Naive thymus-derived CD4-positive, alpha-beta T cell (primary cell): ENCODE measurements at regions of chr22 and their contacts with region 1.

Region 1: DNA sequence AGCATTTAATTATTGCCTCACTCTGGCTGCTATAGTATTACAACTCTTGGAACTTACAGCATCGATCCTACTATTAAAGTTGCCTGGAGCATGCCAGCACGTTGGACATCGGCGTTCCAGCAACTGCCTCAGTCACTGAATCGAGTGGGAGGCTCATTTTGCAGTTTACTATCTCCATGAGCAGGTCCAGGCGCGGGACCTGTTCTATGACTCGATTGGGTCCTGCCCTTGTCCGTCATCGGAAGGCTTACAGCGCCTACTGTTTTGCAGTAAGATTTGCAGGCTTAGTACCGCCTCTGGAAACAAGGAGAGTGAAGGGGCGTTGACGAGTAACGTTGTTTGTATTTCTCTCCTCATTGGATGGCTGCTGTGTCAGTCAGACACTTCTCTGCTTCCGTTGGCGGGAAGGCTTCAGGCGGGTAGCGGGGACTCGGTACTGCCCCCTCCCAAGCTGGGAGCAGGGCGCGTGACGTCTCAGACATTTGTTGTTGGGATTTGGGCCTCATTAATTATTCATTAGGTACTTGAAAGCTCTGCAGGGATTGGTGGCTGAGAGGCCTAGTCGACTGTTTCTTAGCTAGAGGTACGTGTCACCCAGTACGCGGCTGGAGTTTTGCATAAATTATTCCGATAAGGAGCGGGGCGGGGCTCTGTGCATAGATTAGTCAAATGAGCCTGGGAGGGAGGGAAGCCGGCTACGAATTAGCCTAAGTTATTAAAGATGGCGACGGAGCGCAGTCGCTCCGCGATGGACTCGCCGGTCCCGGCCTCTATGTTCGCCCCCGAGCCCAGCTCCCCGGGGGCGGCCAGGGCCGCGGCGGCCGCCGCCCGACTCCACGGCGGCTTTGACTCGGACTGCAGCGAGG is at the start of gene GTPBP1:
- DNase-seq: peak; percentile 76 to 100 (median 99)
- ATAC-seq: peak; percentile 85
- H3K4me3 ChIP-seq: peak within 1 kb of the TSS; percentile 80
- H3K4me3 Mint-ChIP-seq: peak within 1 kb of the TSS; percentile 71 to 98 (median 93)
- H3K27ac ChIP-seq: peak within 1 kb of the TSS; percentile 90
- H3K27ac Mint-ChIP-seq: peak within 1 kb of the TSS; percentile 80 to 99 (median 98)
- H3K4me1 ChIP-seq: peaks cover 36 to 42% of the 10 kb centered on the region in 2 donors
- H3K4me1 Mint-ChIP-seq: peaks cover 36 to 60% (median 59%) of the 10 kb centered on the region in 7 donors
- H3K27me3 ChIP-seq: no peaks in the 10 kb centered on the region
- H3K27me3 Mint-ChIP-seq: no peaks in the 10 kb centered on the region
- total RNA-seq, gene GTPBP1: 79.1 to 209 (median 91.9) TPM

Region 2: GRCh38 chr22:38051900-38052862 is 653.3 kb before region 1 on chr22:
- CTCF ChIA-PET with region 1: no interaction called
- POLR2A ChIA-PET with region 1: no interaction called
- intact Hi-C with region 1: loop called in 1 of 2 experiments (anchors 10 kb)
- DNase-seq: peak; percentile 59 to 75 (median 69)
- ATAC-seq: peak; percentile 88
- H3K4me3 ChIP-seq: no peak overlapping the region
- H3K4me3 Mint-ChIP-seq: peak overlapping the region in 2 of 10 donors; percentile 13 to 51
- H3K27ac ChIP-seq: no peak overlapping the region
- H3K27ac Mint-ChIP-seq: peak overlapping the region in 2 of 9 donors; percentile 38 to 71
- H3K4me1 ChIP-seq: peaks cover 10 to 11% of the 10 kb centered on the region in 2 donors
- H3K4me1 Mint-ChIP-seq: peaks cover 0 to 14% (median 9%) of the 10 kb centered on the region in 7 donors
- H3K27me3 ChIP-seq: no peaks in the 10 kb centered on the region
- H3K27me3 Mint-ChIP-seq: peaks cover 0 to 28% (median 8%) of the 10 kb centered on the region in 5 donors

Region 3: DNA sequence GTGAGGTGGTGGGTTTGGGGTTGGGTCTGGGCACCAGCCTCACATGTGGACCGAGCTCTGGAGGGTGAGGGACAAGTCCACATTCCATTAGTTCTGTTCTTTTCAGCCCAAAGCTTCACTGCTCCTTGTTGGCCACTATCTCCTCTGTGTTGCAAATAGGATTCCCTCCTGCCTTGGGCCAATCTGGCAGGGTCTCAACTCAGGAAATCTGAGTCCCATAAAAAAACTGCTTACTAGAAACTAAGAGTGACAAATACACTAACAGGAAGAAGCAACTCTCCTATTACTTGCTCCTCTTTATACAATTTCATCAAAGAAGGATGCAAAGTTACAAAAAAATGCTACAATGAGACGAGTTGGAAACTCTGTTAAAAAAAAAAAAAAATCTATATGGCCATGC is 322.1 kb before region 1 on chr22:
- CTCF ChIA-PET with region 1: no interaction called
- POLR2A ChIA-PET with region 1: no interaction called
- intact Hi-C with region 1: no loop called
- DNase-seq: no peak
- ATAC-seq: no peak
- H3K4me3 ChIP-seq: no peak overlapping the region
- H3K4me3 Mint-ChIP-seq: no peak overlapping the region
- H3K27ac ChIP-seq: no peak overlapping the region
- H3K27ac Mint-ChIP-seq: no peak overlapping the region
- H3K4me1 ChIP-seq: no peaks in the 10 kb centered on the region
- H3K4me1 Mint-ChIP-seq: peaks cover 0 to 9% (median 0%) of the 10 kb centered on the region in 7 donors
- H3K27me3 ChIP-seq: no peaks in the 10 kb centered on the region
- H3K27me3 Mint-ChIP-seq: no peaks in the 10 kb centered on the region

Region 4: DNA sequence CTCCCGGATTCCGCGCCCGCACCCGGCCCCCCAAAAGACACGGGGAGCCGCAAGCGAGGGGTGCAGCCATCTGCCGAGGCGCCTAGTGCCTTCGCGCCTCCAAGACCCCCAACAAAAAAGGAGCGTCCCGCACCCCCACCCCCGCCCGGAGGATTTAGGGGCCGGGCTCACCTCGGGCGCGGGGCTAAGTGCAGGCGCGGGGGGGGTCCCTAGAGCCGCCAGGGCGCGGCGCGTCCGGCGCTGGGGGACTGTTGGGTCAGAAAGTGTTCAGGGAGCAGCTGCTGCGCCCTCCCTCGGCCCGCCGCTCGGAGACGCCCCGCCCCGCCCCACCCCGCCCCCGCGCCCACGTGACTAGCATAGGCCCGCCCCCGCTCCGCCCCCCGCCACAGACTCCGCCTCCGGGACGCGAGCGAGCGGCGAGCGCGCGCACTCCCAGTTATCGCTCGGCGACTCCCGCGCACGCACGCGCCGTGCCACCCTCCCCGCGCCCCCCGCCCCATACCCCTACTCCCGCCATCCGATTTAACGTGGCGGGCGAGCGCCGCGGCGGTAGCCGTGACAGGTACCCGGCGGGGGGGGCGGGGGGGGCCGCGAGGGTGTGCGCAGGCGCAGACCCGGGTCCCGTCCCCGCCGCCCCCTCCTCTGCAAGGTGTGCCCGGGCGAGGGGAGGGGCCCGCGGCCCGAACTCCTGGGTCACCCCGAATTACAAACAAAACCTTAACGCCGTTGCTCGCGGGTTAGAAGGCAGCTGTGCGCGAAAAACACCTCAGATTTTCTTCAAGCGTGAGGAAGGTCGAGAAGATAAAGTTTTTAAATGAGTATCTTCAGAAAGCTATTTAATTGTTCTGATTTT is 306.6 kb before region 1 on chr22:
- CTCF ChIA-PET with region 1: no interaction called
- POLR2A ChIA-PET with region 1: no interaction called
- intact Hi-C with region 1: loop called in 1 of 2 experiments (anchors 5 kb)
- DNase-seq: peak; percentile 74 to 91 (median 82)
- ATAC-seq: peak; percentile 93
- H3K4me3 ChIP-seq: peak overlapping the region; percentile 46
- H3K4me3 Mint-ChIP-seq: peak overlapping the region; percentile 78 to 93 (median 85)
- H3K27ac ChIP-seq: peak overlapping the region; percentile 69
- H3K27ac Mint-ChIP-seq: peak overlapping the region in 8 of 9 donors; percentile 55 to 84 (median 76)
- H3K4me1 ChIP-seq: no peaks in the 10 kb centered on the region
- H3K4me1 Mint-ChIP-seq: peaks cover 6 to 41% (median 33%) of the 10 kb centered on the region in 7 donors
- H3K27me3 ChIP-seq: no peaks in the 10 kb centered on the region
- H3K27me3 Mint-ChIP-seq: peaks cover 0 to 30% (median 0%) of the 10 kb centered on the region in 5 donors

Region 5: GRCh38 chr22:38554281-38554680 is 151.2 kb before region 1 on chr22:
- CTCF ChIA-PET with region 1: no interaction called
- POLR2A ChIA-PET with region 1: no interaction called
- intact Hi-C with region 1: no loop called
- DNase-seq: no peak
- ATAC-seq: no peak
- H3K4me3 ChIP-seq: no peak overlapping the region
- H3K4me3 Mint-ChIP-seq: no peak overlapping the region
- H3K27ac ChIP-seq: no peak overlapping the region
- H3K27ac Mint-ChIP-seq: no peak overlapping the region
- H3K4me1 ChIP-seq: no peaks in the 10 kb centered on the region
- H3K4me1 Mint-ChIP-seq: no peaks in the 10 kb centered on the region
- H3K27me3 ChIP-seq: no peaks in the 10 kb centered on the region
- H3K27me3 Mint-ChIP-seq: no peaks in the 10 kb centered on the region

Region 6: GRCh38 chr22:38681784-38682335 is 23.6 kb before region 1 on chr22 and contains the start of gene TOMM22:
- CTCF ChIA-PET with region 1: interaction called, 22 read pairs
- POLR2A ChIA-PET with region 1: interaction called, 34 read pairs
- intact Hi-C with region 1: loop called (anchors 1 kb)
- DNase-seq: peak; percentile 74 to 88 (median 83)
- ATAC-seq: peak; percentile 98
- H3K4me3 ChIP-seq: peak within 1 kb of the TSS; percentile 85
- H3K4me3 Mint-ChIP-seq: peak within 1 kb of the TSS; percentile 93 to 100 (median 99)
- H3K27ac ChIP-seq: peak within 1 kb of the TSS; percentile 87
- H3K27ac Mint-ChIP-seq: peak within 1 kb of the TSS; percentile 89 to 99 (median 98)
- H3K4me1 ChIP-seq: peaks cover 5 to 11% of the 10 kb centered on the region in 2 donors
- H3K4me1 Mint-ChIP-seq: peaks cover 12 to 28% (median 24%) of the 10 kb centered on the region in 7 donors
- H3K27me3 ChIP-seq: no peaks in the 10 kb centered on the region
- H3K27me3 Mint-ChIP-seq: no peaks in the 10 kb centered on the region
- total RNA-seq, gene TOMM22: 45.0 to 92.4 (median 50.6) TPM

Region 7: DNA sequence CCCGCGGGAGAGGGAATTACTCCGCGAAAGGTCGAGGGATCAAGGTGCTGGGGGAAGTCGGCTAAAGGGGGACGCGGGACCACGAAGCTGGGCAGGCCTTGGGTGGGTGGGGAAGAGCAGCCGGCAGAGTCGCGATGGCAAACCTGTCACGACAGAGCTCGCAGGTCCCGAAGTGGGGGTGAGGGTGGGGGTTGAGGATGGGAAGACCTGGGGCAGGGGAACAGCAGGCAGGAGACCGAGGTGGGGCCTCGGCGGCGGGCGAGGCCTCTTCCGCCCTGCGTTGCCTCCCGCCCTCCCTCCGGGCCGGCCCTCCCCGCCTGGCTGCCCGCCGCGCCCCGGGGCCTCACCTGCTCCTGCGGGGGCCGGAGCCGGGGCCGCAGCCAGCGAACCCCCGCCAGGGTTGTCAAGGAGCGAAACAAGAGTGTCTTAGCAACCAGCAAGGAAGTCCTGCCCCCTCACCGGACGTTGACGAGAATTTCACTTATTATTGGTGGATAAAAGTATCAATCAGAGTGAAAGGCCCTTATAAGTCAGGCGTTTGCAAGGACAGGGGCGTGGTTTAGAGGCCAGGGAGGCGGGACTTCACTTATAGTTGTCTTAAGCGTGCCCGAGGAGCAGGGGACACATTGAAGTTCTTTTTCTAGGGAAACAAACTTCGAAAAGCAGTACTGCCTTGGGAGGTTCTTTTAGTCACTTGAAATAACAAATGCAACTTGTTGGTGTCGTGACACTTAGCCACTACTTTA is 88.4 kb after region 1 on chr22 and contains the start of gene DNAL4:
- CTCF ChIA-PET with region 1: no interaction called
- POLR2A ChIA-PET with region 1: interaction called, 4 read pairs
- intact Hi-C with region 1: loop called in 1 of 2 experiments (anchors 1 kb)
- DNase-seq: peak; percentile 64 to 95 (median 93)
- ATAC-seq: peak; percentile 99
- H3K4me3 ChIP-seq: peak within 1 kb of the TSS; percentile 75
- H3K4me3 Mint-ChIP-seq: peak within 1 kb of the TSS; percentile 86 to 97 (median 92)
- H3K27ac ChIP-seq: peak within 1 kb of the TSS; percentile 89
- H3K27ac Mint-ChIP-seq: peak within 1 kb of the TSS; percentile 78 to 96 (median 91)
- H3K4me1 ChIP-seq: peaks cover 13 to 26% of the 10 kb centered on the region in 2 donors
- H3K4me1 Mint-ChIP-seq: peaks cover 20 to 44% (median 34%) of the 10 kb centered on the region in 7 donors
- H3K27me3 ChIP-seq: no peaks in the 10 kb centered on the region
- H3K27me3 Mint-ChIP-seq: peaks cover 0 to 27% (median 0%) of the 10 kb centered on the region in 5 donors
- total RNA-seq, gene DNAL4: 5.0 to 11.1 (median 8.9) TPM

Region 8: GRCh38 chr22:39152511-39153219 is 447.2 kb after region 1 on chr22 and contains the start of gene CBX7:
- CTCF ChIA-PET with region 1: no interaction called
- POLR2A ChIA-PET with region 1: no interaction called
- intact Hi-C with region 1: loop called (anchors 2 to 10 kb)
- DNase-seq: peak; percentile 91 to 98 (median 94)
- ATAC-seq: peak; percentile 93
- H3K4me3 ChIP-seq: peak within 1 kb of the TSS; percentile 95
- H3K4me3 Mint-ChIP-seq: peak within 1 kb of the TSS; percentile 83 to 99 (median 92)
- H3K27ac ChIP-seq: peak within 1 kb of the TSS; percentile 89
- H3K27ac Mint-ChIP-seq: peak within 1 kb of the TSS; percentile 87 to 96 (median 91)
- H3K4me1 ChIP-seq: peaks cover 31 to 46% of the 10 kb centered on the region in 2 donors
- H3K4me1 Mint-ChIP-seq: peaks cover 7 to 41% (median 35%) of the 10 kb centered on the region in 7 donors
- H3K27me3 ChIP-seq: no peaks in the 10 kb centered on the region
- H3K27me3 Mint-ChIP-seq: peaks cover 0 to 41% (median 0%) of the 10 kb centered on the region in 5 donors
- total RNA-seq, gene CBX7: 14.2 to 164 (median 76.9) TPM